ENCODE measurements at regions of chr6 and their contacts with region 1.

Region 1: DNA sequence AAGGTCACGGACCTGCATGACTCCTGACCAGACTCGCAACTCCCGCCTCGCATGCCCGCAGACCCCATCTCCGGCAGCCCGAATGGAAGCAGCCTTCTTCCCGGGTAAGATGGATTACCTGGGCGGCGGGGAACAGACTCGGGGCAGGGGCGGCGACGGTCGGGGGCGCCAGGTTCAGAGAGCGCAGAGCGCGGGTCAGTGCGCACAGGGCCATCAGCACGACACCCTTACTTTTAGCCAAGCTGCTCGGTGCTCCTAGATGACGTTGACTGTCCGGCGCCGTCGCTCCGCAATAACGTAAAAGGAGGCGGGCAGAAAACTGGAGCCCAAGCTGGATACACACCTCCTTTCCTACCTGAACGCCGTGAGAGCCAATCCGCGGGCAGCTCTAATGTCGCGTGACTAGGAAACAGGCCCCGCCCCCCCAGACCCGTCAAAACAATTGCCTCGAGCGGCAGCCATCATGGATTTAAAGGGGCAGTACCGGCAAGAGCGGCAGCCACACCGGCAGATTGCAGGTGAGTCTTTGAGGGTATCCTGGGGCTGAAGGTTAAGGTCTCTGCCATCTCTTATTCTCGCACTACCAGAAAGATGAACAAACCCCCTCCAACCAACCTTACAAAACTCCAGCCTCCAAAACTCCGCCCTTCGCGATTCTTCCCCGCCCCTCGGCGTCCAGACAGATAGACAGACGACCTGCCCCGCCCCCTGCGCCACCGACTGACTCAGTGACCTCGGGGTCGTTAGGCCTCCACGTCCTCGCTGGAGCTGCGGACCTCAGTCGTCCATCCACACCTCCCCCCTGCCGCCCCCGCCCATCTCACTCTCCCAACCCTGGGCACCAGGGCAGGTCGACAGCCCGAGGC is at the starts of genes KLC4 and MRPL2:
- DNase-seq: peak; percentile 99
- ATAC-seq: peak; percentile 98
- H3K4me3 Mint-ChIP-seq: peak within 1 kb of the TSS; percentile 85
- H3K27ac Mint-ChIP-seq: peak within 1 kb of the TSS; percentile 94
- H3K4me1 Mint-ChIP-seq: peaks cover 27% of the 10 kb centered on the region
- H3K27me3 Mint-ChIP-seq: no peaks in the 10 kb centered on the region
- total RNA-seq, gene KLC4: 10.0 to 10.1 TPM
- total RNA-seq, gene MRPL2: 93.9 to 110 TPM

Region 2: GRCh38 chr6:42563697-42564505 is 495.5 kb before region 1 on chr6 and contains the start of gene UBR2:
- CTCF ChIA-PET with region 1: no interaction called
- POLR2A ChIA-PET with region 1: no interaction called
- intact Hi-C with region 1: loop called in 1 of 2 experiments (anchors 10 kb)
- DNase-seq: peak; percentile 97
- ATAC-seq: peak; percentile 97
- H3K4me3 Mint-ChIP-seq: peak within 1 kb of the TSS; percentile 97
- H3K27ac Mint-ChIP-seq: peak within 1 kb of the TSS; percentile 95
- H3K4me1 Mint-ChIP-seq: peaks cover 31% of the 10 kb centered on the region
- H3K27me3 Mint-ChIP-seq: no peaks in the 10 kb centered on the region
- total RNA-seq, gene UBR2: 23.9 to 28.1 TPM

Region 3: GRCh38 chr6:42841844-42842584 is 217.4 kb before region 1 on chr6:
- CTCF ChIA-PET with region 1: no interaction called
- POLR2A ChIA-PET with region 1: no interaction called
- intact Hi-C with region 1: no loop called
- DNase-seq: no peak
- ATAC-seq: peak; percentile 65
- H3K4me3 Mint-ChIP-seq: no peak overlapping the region
- H3K27ac Mint-ChIP-seq: no peak overlapping the region
- H3K4me1 Mint-ChIP-seq: peaks cover 27% of the 10 kb centered on the region
- H3K27me3 Mint-ChIP-seq: no peaks in the 10 kb centered on the region

Region 4: DNA sequence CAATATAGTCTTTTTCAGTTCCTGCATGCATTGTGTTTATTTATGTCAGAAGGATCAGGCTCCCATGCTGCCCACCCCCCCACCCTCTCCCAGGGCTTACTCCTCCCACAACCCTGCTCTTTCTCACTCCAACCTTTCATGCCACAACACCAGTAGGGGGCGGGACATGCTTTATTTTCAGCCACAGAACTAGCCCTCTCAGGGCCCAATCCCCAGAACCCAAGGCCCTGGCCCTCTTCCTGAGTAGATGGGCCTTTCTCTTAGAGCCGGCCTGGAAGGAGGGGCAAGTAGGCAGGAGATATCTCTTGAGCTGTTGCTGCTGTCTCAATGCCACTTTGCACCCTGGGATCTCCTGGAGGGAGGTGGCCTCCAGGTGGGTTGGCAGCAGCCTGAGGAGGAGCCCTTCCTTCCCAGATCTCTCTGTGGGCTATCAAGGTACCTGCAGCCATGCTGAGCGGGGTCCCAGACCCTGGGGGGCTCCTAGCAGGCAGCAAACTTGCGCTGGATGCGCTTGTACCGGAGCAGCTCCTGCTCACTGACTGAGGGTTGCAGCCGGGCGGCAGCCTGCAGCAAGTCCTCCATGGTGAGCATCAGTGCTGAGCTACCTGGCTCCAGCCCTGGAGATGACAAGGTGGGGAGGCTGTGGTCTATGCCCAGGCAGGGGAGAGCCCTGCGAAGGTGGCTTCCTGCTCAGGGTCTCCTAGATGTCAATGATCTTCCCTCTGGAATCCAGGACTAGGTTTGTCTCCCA is 95.4 kb before region 1 on chr6:
- CTCF ChIA-PET with region 1: no interaction called
- POLR2A ChIA-PET with region 1: no interaction called
- intact Hi-C with region 1: no loop called
- DNase-seq: peak; percentile 68
- ATAC-seq: peak; percentile 83
- H3K4me3 Mint-ChIP-seq: no peak overlapping the region
- H3K27ac Mint-ChIP-seq: no peak overlapping the region
- H3K4me1 Mint-ChIP-seq: peaks cover 11% of the 10 kb centered on the region
- H3K27me3 Mint-ChIP-seq: no peaks in the 10 kb centered on the region

Region 5: DNA sequence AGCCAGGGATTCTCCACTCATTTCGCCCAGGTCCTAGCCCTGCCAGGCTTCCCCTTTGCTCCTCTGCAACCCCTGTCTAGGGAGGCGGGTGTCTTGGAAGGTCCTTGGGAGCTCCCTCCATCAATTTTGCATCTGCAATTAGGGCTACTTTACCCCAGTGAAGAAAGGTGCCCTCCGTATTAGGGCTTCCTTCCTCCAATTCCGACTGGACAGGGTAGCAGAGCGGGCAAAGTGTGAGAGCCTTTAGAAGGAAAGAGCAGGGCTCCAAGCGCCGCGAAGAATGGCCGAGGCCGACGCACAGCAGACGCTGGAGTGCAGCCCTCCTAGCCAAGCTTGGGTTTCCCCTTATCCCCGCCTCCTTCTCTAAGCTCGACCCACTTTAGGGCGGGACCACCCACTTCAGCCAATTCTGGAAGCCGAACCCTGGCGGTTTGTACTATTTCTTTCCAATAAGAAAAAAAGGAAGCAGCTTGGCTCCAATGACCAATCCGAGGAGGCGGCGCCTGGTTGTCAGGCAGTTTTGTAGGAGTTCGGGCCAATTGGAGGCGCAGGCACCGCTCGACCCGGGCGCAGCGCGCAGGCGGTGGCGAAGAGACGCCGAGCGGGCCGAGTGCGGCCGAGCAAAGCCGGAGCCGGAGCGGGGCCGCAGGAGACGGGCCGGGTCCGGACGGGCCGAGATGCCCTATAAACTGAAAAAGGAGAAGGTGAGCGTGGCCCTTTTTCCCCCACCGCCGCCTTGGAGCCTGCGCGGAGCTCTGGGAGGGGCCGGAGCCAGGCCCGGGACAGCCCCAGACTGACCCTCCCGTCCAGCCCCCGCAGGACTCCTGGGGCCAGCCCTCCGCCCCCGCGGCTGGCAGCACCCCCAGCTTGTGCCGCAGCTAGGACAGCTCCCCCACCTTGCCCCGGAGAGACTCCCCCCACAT is 75.1 kb before region 1 on chr6 and contains the start of gene PPP2R5D:
- CTCF ChIA-PET with region 1: interaction called, 3 read pairs
- POLR2A ChIA-PET with region 1: interaction called, 4 read pairs
- intact Hi-C with region 1: loop called (anchors 1 to 2 kb)
- DNase-seq: peak; percentile 98
- ATAC-seq: peak; percentile 92
- H3K4me3 Mint-ChIP-seq: peak within 1 kb of the TSS; percentile 79
- H3K27ac Mint-ChIP-seq: peak within 1 kb of the TSS; percentile 82
- H3K4me1 Mint-ChIP-seq: peaks cover 52% of the 10 kb centered on the region
- H3K27me3 Mint-ChIP-seq: no peaks in the 10 kb centered on the region
- total RNA-seq, gene PPP2R5D: 51.0 to 57.3 TPM

Region 6: GRCh38 chr6:43247113-43247999 is 188.0 kb after region 1 on chr6:
- CTCF ChIA-PET with region 1: no interaction called
- POLR2A ChIA-PET with region 1: no interaction called
- intact Hi-C with region 1: loop called in 1 of 2 experiments (anchors 1 kb)
- DNase-seq: peak; percentile 94
- ATAC-seq: peak; percentile 99
- H3K4me3 Mint-ChIP-seq: peak overlapping the region; percentile 68
- H3K27ac Mint-ChIP-seq: peak overlapping the region; percentile 62
- H3K4me1 Mint-ChIP-seq: peaks cover 25% of the 10 kb centered on the region
- H3K27me3 Mint-ChIP-seq: peaks cover 14% of the 10 kb centered on the region

Region 7: DNA sequence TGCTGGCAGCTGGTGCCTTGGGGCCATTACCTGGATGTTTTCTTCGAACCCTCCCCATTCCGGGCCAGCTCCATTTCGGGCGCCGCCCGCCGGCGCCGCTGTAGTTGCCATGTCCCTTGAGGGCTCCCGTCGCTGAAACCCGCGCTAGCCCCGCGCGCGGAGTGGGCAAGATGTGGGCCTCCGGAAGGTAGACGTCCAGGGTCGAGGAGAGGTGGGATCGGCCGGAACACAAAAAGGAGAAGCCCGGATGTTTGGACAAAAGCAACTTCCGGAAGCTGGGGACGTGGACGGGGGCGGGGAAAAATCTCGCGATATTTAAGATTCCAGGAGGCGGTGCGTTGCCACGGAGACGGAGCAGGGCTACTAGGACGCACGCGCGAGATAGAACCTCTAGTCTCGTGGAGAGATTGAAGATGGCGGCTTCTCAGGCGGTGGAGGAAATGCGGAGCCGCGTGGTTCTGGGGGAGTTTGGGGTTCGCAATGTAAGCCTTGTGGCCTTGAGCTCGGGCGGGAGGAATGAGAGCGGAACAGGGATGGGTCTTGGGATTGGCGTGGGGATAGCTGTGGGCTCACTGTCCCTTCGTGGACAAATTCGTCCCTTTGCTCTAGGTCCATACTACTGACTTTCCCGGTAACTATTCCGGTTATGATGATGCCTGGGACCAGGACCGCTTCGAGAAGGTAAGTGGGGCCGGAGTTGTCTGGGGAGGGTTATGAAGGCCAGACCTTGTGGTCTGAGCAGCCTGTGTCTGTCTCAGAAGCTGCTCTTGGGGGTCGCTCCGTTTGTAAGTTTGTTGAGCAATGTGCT is 457.5 kb after region 1 on chr6 and contains the starts of genes POLR1C and YIPF3:
- CTCF ChIA-PET with region 1: no interaction called
- POLR2A ChIA-PET with region 1: interaction called, 9 read pairs
- intact Hi-C with region 1: loop called in 1 of 2 experiments (anchors 2 kb)
- DNase-seq: peak; percentile 98
- ATAC-seq: peak; percentile 93
- H3K4me3 Mint-ChIP-seq: no peak within 1 kb of the TSS
- H3K27ac Mint-ChIP-seq: no peak within 1 kb of the TSS
- H3K4me1 Mint-ChIP-seq: peaks cover 32% of the 10 kb centered on the region
- H3K27me3 Mint-ChIP-seq: no peaks in the 10 kb centered on the region
- total RNA-seq, gene POLR1C: 43.4 to 52.9 TPM
- total RNA-seq, gene YIPF3: 38.0 to 39.6 TPM